Astrocyte of the cerebellum (primary cell): ENCODE measurements at regions of chr15 and their contacts with region 1.

Region 1: GRCh38 chr15:64836023-64836536 is 5.6 kb upstream of the PLEKHO2 start:
- DNase-seq: no peak
- H3K4me3 ChIP-seq: no peak overlapping the region
- CTCF ChIP-seq: no peak

Region 2: GRCh38 chr15:64754663-64755426 is 81.2 kb before region 1 on chr15:
- in situ Hi-C with region 1: loop called (anchors 5 kb)
- DNase-seq: no peak
- H3K4me3 ChIP-seq: no peak overlapping the region
- CTCF ChIP-seq: no peak

Region 3: GRCh38 chr15:64780600-64781156 is 55.4 kb before region 1 on chr15:
- in situ Hi-C with region 1: loop called (anchors 5 kb)
- DNase-seq: no peak
- H3K4me3 ChIP-seq: no peak overlapping the region
- CTCF ChIP-seq: no peak

Region 4: GRCh38 chr15:64807051-64807749 is 28.9 kb before region 1 on chr15:
- in situ Hi-C with region 1: no loop called
- DNase-seq: no peak
- H3K4me3 ChIP-seq: no peak overlapping the region
- CTCF ChIP-seq: no peak

Region 5: GRCh38 chr15:64877435-64877834 is 41.4 kb after region 1 on chr15:
- in situ Hi-C with region 1: no loop called
- DNase-seq: no peak
- H3K4me3 ChIP-seq: no peak overlapping the region
- CTCF ChIP-seq: no peak

Region 6: GRCh38 chr15:64928626-64929220 is 92.6 kb after region 1 on chr15:
- in situ Hi-C with region 1: loop called (anchors 10 kb)
- DNase-seq: no peak
- H3K4me3 ChIP-seq: no peak overlapping the region
- CTCF ChIP-seq: no peak

Region 7: GRCh38 chr15:64942321-64942720 is 106.2 kb after region 1 on chr15:
- in situ Hi-C with region 1: loop called (anchors 5 kb)
- DNase-seq: peak; percentile 20
- H3K4me3 ChIP-seq: no peak overlapping the region
- CTCF ChIP-seq: no peak